ENCODE measurements at regions of chr7 and their contacts with region 1.

Region 1: GRCh38 chr7:142853739-142854371 is 1.0 kb upstream of the EPHB6 start:
- DNase-seq: peak in 6 of 10 donors; percentile 59 to 94 (median 74)

Region 2: GRCh38 chr7:143008007-143008901 is 154.4 kb after region 1 on chr7:
- intact Hi-C with region 1: loop called (anchors 2 kb)
- DNase-seq: peak; percentile 66 to 97 (median 84)

Region 3: DNA sequence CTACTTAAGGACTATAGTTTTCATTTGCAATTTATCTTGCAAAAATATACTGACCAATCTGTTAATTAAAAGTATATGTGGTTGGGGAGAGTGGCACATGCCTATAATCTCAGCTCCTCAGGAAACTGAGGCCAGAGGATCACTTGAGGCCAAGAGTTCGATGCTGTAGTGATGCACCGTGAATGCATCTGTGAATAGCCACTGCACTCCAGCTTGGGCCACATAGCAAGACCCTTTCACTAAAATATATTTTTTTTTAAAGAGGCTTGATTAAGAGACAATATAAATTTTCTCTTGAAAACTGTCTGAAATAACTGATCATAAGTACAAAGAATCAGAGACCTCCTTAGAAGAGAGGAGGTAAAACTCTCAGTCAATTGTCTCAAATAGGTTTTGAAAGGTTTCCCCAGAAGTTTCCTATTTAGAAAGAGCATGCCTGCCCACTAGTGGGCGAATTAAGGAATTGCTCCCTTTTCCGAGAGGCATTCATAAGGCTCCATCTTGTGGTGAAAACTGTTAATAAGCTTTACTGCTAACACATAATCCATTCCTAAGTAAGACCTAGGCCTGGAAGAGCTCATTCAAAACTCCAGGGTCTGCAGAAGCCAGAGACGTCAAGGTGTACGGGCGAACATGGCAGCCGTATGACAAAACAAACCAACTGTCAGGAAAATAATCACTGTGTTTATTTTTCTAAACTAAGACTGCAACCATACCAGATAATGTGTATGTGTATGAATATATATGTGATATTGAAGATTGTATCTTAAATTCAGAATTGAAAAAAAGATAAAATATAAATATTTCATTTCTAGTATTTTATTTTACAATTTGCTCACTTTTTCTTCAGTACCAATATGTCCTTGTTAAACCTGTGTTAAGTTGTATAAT is 361.2 kb after region 1 on chr7:
- intact Hi-C with region 1: loop called (anchors 1 kb)
- DNase-seq: peak in 5 of 10 donors; percentile 33 to 75 (median 41)

Measured in posterior cingulate gyrus (tissue), 11 donors.